ENCODE measurements at regions of chr3 and their contacts with region 1.

Region 1: DNA sequence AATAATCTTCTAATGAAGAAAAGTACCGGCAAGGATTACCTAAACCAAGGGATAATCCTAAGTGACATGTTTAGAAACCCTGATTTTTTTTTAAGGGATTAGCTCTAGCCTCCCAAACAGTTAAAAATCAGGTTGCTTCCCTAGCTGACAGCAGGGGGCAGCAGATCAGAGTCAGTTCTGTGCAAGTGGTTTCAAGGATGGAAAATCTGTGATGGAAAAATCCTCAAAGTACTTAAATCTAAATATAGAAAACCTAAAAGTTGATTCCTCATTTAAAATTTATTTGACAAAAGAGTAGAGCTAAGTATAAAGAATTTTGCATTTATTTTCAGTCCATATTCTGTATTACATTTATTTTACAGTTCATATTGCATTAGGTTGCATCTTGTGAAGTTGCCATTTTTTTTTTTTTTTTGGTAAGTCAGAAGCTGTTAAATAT is 107.6 kb downstream of the PEX5L start:
- DNase-seq: peak in 1 of 2 donors; percentile 24
- ATAC-seq: no peak
- H3K4me3 ChIP-seq: no peak overlapping the region
- H3K27ac ChIP-seq: no peak overlapping the region
- H3K4me1 ChIP-seq: no peaks in the 10 kb centered on the region
- H3K27me3 ChIP-seq: peaks cover 0 to 22% (median 0%) of the 10 kb centered on the region in 7 donors
- CTCF ChIP-seq: peak; percentile 30 to 81 (median 67)

Region 2: DNA sequence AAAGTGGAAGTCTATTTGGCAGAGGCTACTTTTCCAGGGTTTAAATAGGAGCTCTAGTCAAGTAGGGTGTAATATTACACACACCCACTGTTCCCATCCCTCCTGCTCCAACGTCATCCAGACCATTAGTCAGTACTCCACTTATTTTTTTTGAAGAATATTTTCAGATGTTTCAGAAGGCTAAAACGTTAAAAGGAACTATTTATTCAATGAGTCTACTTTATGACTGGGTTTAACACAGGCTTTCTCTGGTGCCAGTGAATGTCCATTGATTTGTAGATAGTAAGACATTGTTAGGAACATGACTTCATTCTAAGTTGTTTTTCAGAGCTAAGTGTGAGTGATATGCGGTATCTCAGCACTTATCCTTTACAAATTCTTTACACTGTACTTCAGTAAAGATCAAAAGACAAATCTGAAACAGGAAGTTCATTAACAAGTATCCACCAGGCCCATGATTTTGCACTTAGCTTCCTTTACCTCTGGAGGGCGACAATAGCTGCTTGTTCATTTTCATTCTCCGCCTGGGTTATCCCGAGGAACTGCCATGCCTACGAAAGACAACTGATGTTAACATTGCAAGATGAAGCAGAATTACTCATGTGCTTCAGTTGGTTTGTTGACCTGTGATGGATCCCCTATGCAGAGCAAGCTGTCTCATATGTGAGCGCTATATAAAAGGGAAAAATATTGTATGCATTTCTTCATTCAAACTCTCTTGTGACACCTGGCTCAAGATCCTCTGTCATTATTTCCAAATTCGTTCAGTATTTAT is 117.6 kb before region 1 on chr3:
- intact Hi-C with region 1: loop called in 3 of 10 experiments (anchors 10 kb)
- DNase-seq: peak in 1 of 2 donors; percentile 23
- ATAC-seq: peak in 7 of 8 donors; percentile 55 to 88 (median 73)
- H3K4me3 ChIP-seq: no peak overlapping the region
- H3K27ac ChIP-seq: no peak overlapping the region
- H3K4me1 ChIP-seq: no peaks in the 10 kb centered on the region
- H3K27me3 ChIP-seq: no peaks in the 10 kb centered on the region
- CTCF ChIP-seq: peak; percentile 34 to 77 (median 65)

Region 3: DNA sequence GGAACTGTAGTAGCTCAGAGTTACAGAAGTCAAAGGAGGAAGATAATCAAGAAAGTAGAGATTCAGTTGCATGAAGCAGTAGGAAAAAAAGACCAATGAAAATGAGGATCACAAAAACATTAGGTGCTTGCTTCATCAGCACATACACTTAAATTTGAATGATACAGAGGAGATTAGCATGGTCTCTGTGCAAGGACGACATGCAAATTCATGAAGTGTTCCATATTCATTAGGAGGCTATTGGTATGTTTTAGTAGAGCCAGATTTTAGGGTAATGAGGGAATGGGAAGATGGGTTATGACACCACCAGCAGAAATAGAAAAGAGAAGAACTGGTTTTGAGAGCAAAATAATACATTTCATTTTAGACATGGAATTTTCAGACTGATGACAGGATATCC is 651.8 kb after region 1 on chr3:
- intact Hi-C with region 1: loop called in 1 of 10 experiments (anchors 10 kb)
- DNase-seq: no peak
- ATAC-seq: no peak
- H3K4me3 ChIP-seq: no peak overlapping the region
- H3K27ac ChIP-seq: no peak overlapping the region
- H3K4me1 ChIP-seq: no peaks in the 10 kb centered on the region
- H3K27me3 ChIP-seq: peaks cover 0 to 48% (median 14%) of the 10 kb centered on the region in 7 donors
- CTCF ChIP-seq: no peak

Region 4: DNA sequence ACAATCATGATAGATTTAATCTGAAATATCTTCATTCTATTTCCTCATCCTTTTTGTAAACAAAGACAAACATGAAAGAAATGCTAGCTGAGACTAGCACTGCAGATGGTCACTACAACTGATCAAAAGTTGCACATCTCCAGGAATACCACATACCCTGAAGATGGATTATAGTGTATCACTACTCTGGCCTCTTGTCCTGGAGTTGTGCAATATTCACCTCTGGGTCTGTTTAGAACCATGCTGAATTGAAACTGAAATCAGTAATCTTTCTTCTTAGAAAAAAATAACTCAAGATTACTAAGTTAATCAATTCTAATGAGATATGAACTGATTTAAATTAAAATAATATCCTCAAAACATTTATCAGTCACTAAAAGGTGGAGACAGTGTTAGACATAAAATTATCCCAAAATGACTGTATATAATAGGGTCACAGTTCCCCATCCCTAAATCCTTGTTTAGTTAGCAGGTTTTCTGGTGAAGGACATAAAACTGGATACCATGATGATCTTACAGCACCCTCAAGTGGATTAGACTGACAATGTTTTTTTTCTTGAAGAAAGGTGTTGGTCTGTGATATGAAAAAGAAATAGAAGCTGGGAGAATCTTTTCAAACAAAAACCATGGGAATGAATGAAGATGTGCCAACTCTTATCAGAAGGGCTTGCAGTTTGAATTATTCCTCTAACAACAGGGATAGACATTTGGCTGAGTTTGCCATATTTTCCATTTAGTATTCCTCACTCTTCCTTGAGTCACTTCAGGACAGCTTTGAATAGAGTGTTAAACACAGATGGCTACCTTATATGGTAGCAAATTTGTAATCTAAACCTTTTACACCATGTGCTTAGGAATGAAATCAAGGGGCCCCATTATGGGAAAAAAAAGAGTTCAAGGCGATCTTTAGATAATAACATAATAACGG is 665.8 kb after region 1 on chr3:
- intact Hi-C with region 1: loop called in 1 of 10 experiments (anchors 10 kb)
- DNase-seq: no peak
- ATAC-seq: no peak
- H3K4me3 ChIP-seq: no peak overlapping the region
- H3K27ac ChIP-seq: no peak overlapping the region
- H3K4me1 ChIP-seq: no peaks in the 10 kb centered on the region
- H3K27me3 ChIP-seq: peaks cover 0 to 51% (median 14%) of the 10 kb centered on the region in 7 donors
- CTCF ChIP-seq: peak in 6 of 9 donors; percentile 13 to 47 (median 22)